CD4-positive, alpha-beta T cell (primary cell): ENCODE measurements at regions of chr13 and their contacts with region 1.

Region 1: GRCh38 chr13:44435142-44435982 is 61.7 kb downstream of the SERP2 start:
- DNase-seq: peak; percentile 76 to 95 (median 80)
- ATAC-seq: peak; percentile 83
- H3K4me3 ChIP-seq: peak overlapping the region; percentile 64
- H3K4me3 Mint-ChIP-seq: peak overlapping the region; percentile 91
- H3K27ac ChIP-seq: peak overlapping the region; percentile 3 to 43
- H3K27ac Mint-ChIP-seq: peak overlapping the region; percentile 57
- H3K4me1 ChIP-seq: peaks cover 29% of the 10 kb centered on the region
- H3K4me1 Mint-ChIP-seq: peaks cover 35% of the 10 kb centered on the region
- H3K27me3 ChIP-seq: peaks cover 14 to 18% of the 10 kb centered on the region in 2 experiments
- H3K27me3 Mint-ChIP-seq: peaks cover 12% of the 10 kb centered on the region
- CTCF ChIP-seq: no peak

Region 2: DNA sequence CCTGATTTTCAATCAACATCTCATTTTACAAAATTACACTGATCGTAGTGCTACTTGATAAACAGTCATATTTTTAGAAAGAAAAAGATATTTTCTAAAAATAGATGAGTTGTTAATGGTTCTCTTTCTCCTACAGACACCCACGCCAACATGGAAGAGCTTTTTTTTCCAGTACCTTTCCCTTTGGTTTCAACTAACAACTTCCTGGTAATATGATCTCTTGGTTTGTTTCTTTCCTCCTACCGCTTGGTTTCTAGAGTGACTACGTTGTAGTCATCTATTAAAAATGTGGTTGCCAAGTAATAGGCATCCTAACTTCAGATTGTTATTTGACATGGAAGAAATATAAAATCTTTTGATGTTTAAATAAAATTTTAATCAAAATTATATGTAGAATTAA is 366.6 kb before region 1 on chr13:
- CTCF ChIA-PET with region 1: no interaction called
- POLR2A ChIA-PET with region 1: no interaction called
- intact Hi-C with region 1: no loop called
- DNase-seq: no peak
- ATAC-seq: no peak
- H3K4me3 ChIP-seq: no peak overlapping the region
- H3K4me3 Mint-ChIP-seq: no peak overlapping the region
- H3K27ac ChIP-seq: no peak overlapping the region
- H3K27ac Mint-ChIP-seq: no peak overlapping the region
- H3K4me1 ChIP-seq: no peaks in the 10 kb centered on the region
- H3K4me1 Mint-ChIP-seq: no peaks in the 10 kb centered on the region
- H3K27me3 ChIP-seq: peaks cover 0 to 5% of the 10 kb centered on the region in 2 experiments
- H3K27me3 Mint-ChIP-seq: peaks cover 5% of the 10 kb centered on the region
- CTCF ChIP-seq: no peak

Region 3: GRCh38 chr13:44141725-44142539 is 293.4 kb before region 1 on chr13:
- CTCF ChIA-PET with region 1: no interaction called
- POLR2A ChIA-PET with region 1: interaction called, 6 read pairs
- intact Hi-C with region 1: loop called (anchors 1 to 5 kb)
- DNase-seq: peak; percentile 76 to 95 (median 90)
- ATAC-seq: peak; percentile 96
- H3K4me3 ChIP-seq: peak overlapping the region; percentile 84
- H3K4me3 Mint-ChIP-seq: peak overlapping the region; percentile 93
- H3K27ac ChIP-seq: peak overlapping the region; percentile 48 to 76
- H3K27ac Mint-ChIP-seq: peak overlapping the region; percentile 77
- H3K4me1 ChIP-seq: peaks cover 15% of the 10 kb centered on the region
- H3K4me1 Mint-ChIP-seq: peaks cover 16% of the 10 kb centered on the region
- H3K27me3 ChIP-seq: no peaks in the 10 kb centered on the region
- H3K27me3 Mint-ChIP-seq: no peaks in the 10 kb centered on the region
- CTCF ChIP-seq: no peak

Region 4: GRCh38 chr13:44191504-44192171 is 243.7 kb before region 1 on chr13:
- CTCF ChIA-PET with region 1: interaction called, 3 read pairs
- POLR2A ChIA-PET with region 1: interaction called, 6 read pairs
- intact Hi-C with region 1: loop called (anchors 1 to 2 kb)
- DNase-seq: peak in 13 of 14 experiments; percentile 3 to 80 (median 23)
- ATAC-seq: peak; percentile 87
- H3K4me3 ChIP-seq: peak overlapping the region; percentile 32
- H3K4me3 Mint-ChIP-seq: peak overlapping the region; percentile 35
- H3K27ac ChIP-seq: peak overlapping the region in 1 of 2 donors; percentile 41
- H3K27ac Mint-ChIP-seq: peak overlapping the region; percentile 79
- H3K4me1 ChIP-seq: peaks cover 13% of the 10 kb centered on the region
- H3K4me1 Mint-ChIP-seq: peaks cover 31% of the 10 kb centered on the region
- H3K27me3 ChIP-seq: no peaks in the 10 kb centered on the region
- H3K27me3 Mint-ChIP-seq: no peaks in the 10 kb centered on the region
- CTCF ChIP-seq: peak; percentile 57

Region 5: GRCh38 chr13:44470638-44471562 is 35.5 kb after region 1 on chr13:
- CTCF ChIA-PET with region 1: no interaction called
- POLR2A ChIA-PET with region 1: no interaction called
- intact Hi-C with region 1: loop called in 1 of 2 experiments (anchors 2 kb)
- DNase-seq: peak in 3 of 14 experiments; percentile 28 to 53 (median 47)
- ATAC-seq: no peak
- H3K4me3 ChIP-seq: no peak overlapping the region
- H3K4me3 Mint-ChIP-seq: no peak overlapping the region
- H3K27ac ChIP-seq: no peak overlapping the region
- H3K27ac Mint-ChIP-seq: no peak overlapping the region
- H3K4me1 ChIP-seq: no peaks in the 10 kb centered on the region
- H3K4me1 Mint-ChIP-seq: no peaks in the 10 kb centered on the region
- H3K27me3 ChIP-seq: no peaks in the 10 kb centered on the region
- H3K27me3 Mint-ChIP-seq: no peaks in the 10 kb centered on the region
- CTCF ChIP-seq: peak; percentile 65